GM10248 (cell line): ENCODE measurements at regions of chr1 and their contacts with region 1.

Region 1: GRCh38 chr1:31394628-31395193 is 18.3 kb upstream of the SERINC2 start:
- DNase-seq: peak; percentile 88
- CTCF ChIP-seq: peak; percentile 93

Region 2: DNA sequence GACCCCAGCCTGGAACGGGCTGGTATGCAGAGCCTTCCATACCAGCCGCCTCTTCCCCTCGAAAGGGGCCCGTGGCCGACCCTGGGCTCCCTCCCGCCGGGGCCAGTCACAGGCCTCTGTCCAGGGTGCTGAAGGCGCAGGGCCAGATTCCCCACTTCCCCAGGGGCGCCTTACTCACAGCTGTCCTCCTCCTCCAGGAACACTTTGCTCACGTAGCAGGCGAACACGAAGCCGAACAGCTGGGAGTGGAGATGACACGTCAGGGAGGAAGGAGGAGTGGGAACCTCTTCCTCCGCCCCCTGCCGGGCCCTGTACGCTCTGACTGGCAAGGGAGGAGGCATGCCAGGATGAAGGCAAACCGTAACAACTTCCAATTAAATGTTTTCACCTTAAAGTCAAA is 212.4 kb before region 1 on chr1:
- CTCF ChIA-PET with region 1: interaction called, 16 read pairs
- POLR2A ChIA-PET with region 1: no interaction called
- DNase-seq: peak; percentile 79
- CTCF ChIP-seq: no peak

Region 3: DNA sequence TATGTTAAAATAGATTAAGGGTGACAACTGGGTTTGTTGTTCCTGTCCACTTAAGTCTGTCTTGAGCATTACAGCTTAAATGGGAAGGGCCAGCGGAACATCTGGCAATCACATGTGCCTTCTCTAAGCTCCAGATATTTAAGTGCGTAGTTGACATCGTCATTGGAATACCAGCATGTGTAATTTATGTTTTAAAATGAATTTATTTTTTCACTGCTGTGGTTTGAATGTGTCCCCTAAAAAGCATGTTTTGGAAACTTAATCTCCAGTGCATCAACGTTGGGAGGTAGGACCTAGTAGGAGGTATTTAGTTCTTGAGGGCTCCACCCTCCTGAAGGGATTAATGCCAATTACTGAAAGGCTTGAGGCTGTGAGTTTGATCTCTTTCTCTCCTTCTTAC is 84.5 kb before region 1 on chr1:
- CTCF ChIA-PET with region 1: no interaction called
- POLR2A ChIA-PET with region 1: no interaction called
- DNase-seq: no peak
- CTCF ChIP-seq: no peak

Region 4: GRCh38 chr1:31383967-31384366 is 10.7 kb before region 1 on chr1:
- CTCF ChIA-PET with region 1: interaction called, 24 read pairs
- POLR2A ChIA-PET with region 1: no interaction called
- DNase-seq: no peak
- CTCF ChIP-seq: no peak

Region 5: DNA sequence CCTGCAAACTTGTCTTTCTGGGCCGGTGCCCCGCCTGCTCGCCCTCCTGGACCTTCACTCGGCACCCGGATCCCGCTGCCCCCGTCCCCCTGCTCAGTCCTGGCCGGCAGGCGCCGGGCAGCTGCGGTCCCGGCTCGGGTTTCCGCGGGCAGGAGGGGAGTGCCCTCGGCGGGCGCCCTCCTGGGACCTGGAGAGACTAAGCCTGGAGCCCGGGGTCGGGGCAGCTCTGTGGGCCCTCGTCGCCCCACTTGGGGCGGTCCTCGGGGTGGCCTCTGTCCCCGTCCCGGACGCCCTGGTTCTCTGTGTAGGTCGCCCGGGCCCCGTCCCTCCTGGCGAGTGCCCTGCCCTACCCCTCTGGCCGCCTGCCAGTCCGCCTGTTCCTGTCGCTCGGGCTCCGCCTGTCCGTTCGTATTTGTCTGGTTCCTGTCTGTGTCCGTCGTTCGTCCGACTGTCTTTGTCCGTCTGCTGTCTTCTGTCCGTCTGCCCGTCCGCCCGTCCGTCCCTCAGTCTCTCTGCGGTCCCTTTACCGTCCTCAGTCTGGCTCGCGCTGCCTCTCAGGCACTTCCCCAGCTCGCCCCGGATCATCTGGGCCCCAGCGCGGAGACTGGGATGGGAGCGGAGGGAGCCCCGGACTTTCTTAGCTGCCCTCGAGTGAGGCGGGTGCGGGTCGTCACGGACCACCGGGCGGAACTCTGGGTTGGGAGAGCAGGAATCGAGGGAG is 18.9 kb after region 1 on chr1:
- CTCF ChIA-PET with region 1: interaction called, 95 read pairs
- POLR2A ChIA-PET with region 1: no interaction called
- DNase-seq: no peak
- CTCF ChIP-seq: no peak

Region 6: GRCh38 chr1:31483012-31483946 is 88.6 kb after region 1 on chr1:
- CTCF ChIA-PET with region 1: no interaction called
- POLR2A ChIA-PET with region 1: no interaction called
- DNase-seq: peak; percentile 59
- CTCF ChIP-seq: no peak

Region 7: DNA sequence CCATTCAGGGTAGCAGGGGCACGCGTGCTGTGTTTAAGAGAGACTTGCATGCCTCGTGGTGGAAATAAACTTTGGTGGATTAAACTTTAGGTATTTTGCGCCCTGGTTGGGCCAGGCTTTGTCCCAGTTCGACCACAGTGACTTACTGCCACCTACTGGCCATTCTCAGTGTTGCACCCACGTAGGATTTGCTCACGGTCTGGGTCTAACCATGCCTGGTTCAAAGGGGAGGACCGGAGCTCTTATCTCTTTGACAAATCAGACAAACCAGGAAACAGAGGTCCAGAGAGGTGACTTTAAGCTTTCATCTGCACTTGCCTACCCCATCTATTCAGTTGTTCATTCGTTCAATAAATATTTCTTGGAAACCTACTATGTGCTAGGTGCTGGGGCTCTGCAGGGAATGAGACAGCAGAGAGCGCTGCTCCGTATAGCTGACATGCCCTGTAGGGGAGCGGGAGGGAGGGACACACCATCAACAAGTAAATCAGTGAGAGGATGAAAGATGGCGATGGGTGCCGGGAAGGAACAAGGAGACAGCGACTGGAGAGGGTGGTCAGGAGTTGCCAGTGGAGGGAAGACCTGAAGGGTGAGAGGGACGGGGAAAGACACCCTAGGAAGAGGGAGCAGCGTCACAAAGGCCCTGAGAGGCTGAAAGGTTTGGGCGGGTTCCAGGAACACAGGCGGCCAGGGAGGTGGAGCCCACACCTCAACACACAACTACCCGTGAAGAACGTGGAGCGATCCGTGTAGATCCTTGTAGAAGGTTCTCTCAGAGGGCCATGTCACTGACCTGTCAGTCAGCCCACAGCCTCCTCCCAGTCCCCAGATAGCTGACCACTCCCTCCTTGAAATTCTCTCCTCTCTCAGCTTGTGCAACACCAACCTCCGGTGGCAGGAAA is 154.4 kb after region 1 on chr1:
- CTCF ChIA-PET with region 1: interaction called, 46 read pairs
- POLR2A ChIA-PET with region 1: no interaction called
- DNase-seq: peak; percentile 87
- CTCF ChIP-seq: peak; percentile 89

Region 8: GRCh38 chr1:31753707-31754349 is 359.1 kb after region 1 on chr1:
- CTCF ChIA-PET with region 1: no interaction called
- POLR2A ChIA-PET with region 1: no interaction called
- DNase-seq: no peak
- CTCF ChIP-seq: no peak

Region 9: DNA sequence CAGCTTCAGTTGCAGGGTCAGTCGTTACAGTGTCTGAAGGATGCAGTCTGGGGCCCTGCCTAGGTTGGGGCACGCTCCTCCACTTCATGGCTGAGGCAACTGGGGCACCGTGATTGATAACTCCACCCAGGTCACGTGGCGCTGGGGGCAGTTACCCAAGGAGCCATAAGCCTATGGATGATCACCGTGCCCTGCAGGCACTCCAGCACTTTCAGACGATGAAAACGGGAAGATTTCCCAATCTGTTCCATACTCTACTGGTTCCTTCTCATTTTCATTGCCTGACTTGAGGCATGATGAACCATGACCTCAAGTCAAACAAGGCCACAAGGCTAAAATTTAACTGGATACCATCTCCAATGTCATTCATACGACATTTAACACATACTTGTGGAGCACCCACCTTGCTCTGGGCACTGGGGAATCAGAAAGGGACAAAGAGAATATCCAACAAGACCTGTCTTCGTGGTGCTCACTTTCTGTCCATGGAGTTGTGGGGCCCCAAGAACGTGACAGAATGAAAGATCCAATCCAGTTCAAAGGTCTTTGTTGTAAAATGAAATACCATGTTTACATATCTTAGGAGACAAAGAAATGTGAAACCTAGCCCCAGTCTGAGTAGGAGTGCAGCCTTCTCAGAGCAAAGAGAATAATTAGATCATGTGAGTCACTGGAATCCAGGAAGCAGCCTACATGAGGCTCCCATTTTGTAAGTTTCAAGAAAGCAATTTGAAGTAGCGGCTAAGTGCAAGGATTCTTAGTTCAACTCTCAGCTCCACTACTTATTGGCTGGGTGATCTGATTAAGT is 460.5 kb after region 1 on chr1:
- CTCF ChIA-PET with region 1: no interaction called
- POLR2A ChIA-PET with region 1: no interaction called
- DNase-seq: no peak
- CTCF ChIP-seq: no peak